SK-N-SH (cell line): ENCODE measurements at regions of chr3 and their contacts with region 1.

Region 1: DNA sequence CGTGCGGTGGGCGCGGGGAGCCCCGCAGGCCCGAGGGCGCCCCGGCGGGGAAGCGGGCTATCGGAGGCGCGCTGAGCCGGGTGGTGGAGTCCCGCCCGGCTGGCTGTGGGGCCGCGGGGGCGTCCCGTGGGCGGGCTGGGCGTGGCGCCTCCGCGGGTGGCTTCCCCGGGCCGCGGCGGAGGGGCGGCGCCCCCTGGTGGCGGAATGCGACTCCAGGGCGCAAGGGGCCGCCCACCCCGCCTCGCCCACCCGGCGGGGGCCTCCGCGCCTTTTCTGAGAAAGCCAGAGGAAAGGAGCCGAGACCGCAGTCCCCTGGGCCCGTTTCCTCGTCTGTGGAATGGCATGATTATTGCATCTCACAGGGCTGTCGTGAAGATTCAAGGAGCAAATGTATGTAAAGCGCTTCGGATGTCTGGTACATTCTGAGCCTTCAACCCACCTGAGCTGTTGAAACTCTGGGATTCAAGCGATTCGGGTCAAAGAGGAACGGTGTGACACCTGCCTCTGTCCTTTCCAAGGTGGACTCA is 31.9 kb upstream of the RAB6B start:
- DNase-seq: peak; percentile 95
- H3K4me3 ChIP-seq: peak overlapping the region; percentile 23 to 53; a peak in 3 of 4 replicates
- H3K27ac ChIP-seq: no peak overlapping the region
- H3K4me1 ChIP-seq: peaks cover 0 to 10% of the 10 kb centered on the region in 2 experiments; a peak in 2 of 4 replicates
- H3K27me3 ChIP-seq: no peaks in the 10 kb centered on the region
- CTCF ChIP-seq: peak; percentile 75
- EP300 ChIP-seq: no peak
- RAD21 ChIP-seq: peak; percentile 61

Region 2: DNA sequence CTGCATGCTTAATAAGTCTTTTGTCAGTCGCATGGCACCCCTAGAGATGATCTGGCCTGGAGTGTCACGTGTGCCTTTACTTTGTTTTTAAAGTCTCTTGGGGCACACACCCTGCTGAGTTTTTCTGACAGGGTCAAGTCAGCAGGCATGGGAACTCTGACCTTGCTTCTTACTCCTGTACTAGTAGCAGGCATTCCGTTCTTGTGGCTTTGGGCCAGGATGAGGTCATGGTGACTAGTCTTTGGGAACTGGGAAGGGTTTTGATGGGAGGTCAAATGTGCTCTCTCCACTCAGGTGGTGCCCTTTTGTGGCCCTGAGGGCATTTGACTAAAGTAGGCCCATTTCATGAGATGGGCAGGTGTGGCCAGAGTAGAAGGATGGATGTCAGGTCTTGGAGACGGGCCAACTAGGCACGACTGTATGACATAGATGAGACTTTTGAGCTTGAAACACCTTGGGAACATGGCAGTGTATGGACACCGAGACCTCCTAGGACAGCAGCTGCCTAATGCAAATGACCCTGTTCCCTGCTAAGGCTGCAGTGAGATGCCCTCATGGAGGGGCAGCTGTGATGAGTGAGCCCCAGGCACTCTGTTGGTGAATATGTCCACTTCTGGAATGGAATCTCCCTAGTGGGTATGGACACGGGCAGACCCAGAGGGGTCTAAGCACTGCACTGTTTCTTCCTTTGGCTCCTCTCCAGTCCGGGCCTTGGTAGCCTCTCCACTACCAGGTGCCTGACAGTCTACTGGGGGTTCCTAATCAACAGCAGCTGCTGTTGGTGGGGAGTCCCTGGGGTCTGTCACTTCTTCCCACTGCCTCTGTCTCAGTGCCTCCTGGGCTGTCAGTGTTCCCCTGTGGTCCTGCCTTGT is 105.6 kb before region 1 on chr3:
- CTCF ChIA-PET with region 1: interaction called, 103 read pairs
- POLR2A ChIA-PET with region 1: no interaction called
- DNase-seq: no peak
- H3K4me3 ChIP-seq: no peak overlapping the region
- H3K27ac ChIP-seq: no peak overlapping the region
- H3K4me1 ChIP-seq: no peaks in the 10 kb centered on the region
- H3K27me3 ChIP-seq: no peaks in the 10 kb centered on the region
- CTCF ChIP-seq: no peak
- EP300 ChIP-seq: no peak
- RAD21 ChIP-seq: no peak

Region 3: DNA sequence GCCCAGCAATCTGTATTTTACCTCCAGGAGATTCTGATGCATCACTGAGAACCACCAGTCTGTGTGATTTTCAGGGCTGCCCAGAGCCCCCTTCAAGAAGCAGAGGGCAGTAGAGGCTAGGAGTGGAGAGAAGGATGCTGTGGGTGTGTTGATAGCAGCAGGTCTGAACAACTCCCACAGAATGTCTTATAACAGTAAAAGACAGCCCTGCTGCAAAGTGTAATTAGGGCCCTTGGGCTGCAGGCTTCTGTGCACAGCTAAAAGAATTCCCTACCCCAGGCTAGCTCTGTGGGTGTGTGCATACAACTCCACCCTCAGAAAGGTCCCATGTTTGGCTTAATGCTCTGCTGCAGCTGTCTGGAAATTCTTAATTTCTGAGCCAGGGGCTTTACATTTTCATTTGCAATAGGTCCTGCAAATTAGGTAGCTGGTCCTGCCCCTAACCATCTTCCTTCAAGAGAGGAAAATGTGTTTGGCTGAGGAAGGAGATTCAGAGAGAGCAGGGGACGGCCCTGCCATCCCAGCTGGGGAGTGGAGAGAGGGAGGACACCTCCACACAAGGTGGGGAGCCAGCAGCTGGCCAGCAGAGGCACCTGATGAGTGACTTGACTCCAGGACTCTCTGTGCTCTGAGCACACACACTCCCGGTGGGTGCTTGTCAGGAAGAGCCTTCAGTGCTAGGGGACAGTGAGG is 11.3 kb after region 1 on chr3:
- CTCF ChIA-PET with region 1: interaction called, 11 read pairs
- POLR2A ChIA-PET with region 1: no interaction called
- DNase-seq: no peak
- H3K4me3 ChIP-seq: no peak overlapping the region
- H3K27ac ChIP-seq: no peak overlapping the region
- H3K4me1 ChIP-seq: peaks cover 4 to 11% of the 10 kb centered on the region in 2 experiments; a peak in 2 of 4 replicates
- H3K27me3 ChIP-seq: 0 out of 2 replicates have a peak, but pooled peaks cover 4% of the 10 kb centered on the region
- CTCF ChIP-seq: no peak
- EP300 ChIP-seq: no peak
- RAD21 ChIP-seq: peak; percentile 49

Region 4: GRCh38 chr3:133944641-133945380 is 17.2 kb after region 1 on chr3:
- CTCF ChIA-PET with region 1: interaction called, 17 read pairs
- POLR2A ChIA-PET with region 1: no interaction called
- DNase-seq: peak; percentile 59
- H3K4me3 ChIP-seq: peak overlapping the region in 1 of 2 experiments; percentile 13; a peak in 2 of 4 replicates
- H3K27ac ChIP-seq: peak overlapping the region; percentile 70 to 80
- H3K4me1 ChIP-seq: peaks cover 26 to 30% of the 10 kb centered on the region in 2 experiments; a peak in 3 of 4 replicates
- H3K27me3 ChIP-seq: peaks cover 8% of the 10 kb centered on the region; the same call in 1 of the 2 replicates
- CTCF ChIP-seq: no peak
- EP300 ChIP-seq: peak; percentile 22 to 90; a peak in 2 of 4 replicates
- RAD21 ChIP-seq: no peak

Region 5: DNA sequence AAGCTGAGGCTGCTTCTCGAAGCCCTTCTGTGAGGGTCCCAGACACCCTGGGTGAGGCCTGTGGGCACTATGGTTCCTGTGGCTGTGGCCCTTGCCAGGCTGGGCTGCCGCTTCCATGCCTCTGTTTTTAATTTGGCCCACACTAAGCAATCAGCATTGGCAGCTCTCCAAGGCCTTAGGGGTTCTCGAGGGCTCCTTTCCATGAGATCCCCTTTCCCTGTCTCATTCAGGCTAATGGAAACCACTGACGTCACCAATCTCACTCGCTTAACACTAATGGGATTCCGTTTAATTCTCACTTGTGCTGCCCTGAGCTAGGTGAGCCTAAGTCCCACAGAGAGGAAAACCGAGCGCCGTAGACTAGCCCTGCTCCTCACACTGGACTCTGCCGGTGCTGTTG is 28.3 kb after region 1 on chr3:
- CTCF ChIA-PET with region 1: interaction called, 23 read pairs
- POLR2A ChIA-PET with region 1: no interaction called
- DNase-seq: peak; percentile 89
- H3K4me3 ChIP-seq: no peak overlapping the region; a peak in 1 of 4 replicates
- H3K27ac ChIP-seq: peak overlapping the region in 1 of 2 experiments; percentile 62; a peak in 2 of 4 replicates
- H3K4me1 ChIP-seq: peaks cover 0 to 24% of the 10 kb centered on the region in 2 experiments; a peak in 2 of 4 replicates
- H3K27me3 ChIP-seq: 0 out of 2 replicates have a peak, but pooled peaks cover 10% of the 10 kb centered on the region
- CTCF ChIP-seq: no peak
- EP300 ChIP-seq: peak in 1 of 2 experiments; percentile 70; a peak in 1 of 4 replicates
- RAD21 ChIP-seq: peak; percentile 24; the same call in 1 of the 2 replicates

Region 6: GRCh38 chr3:133991637-133992036 is 64.0 kb after region 1 on chr3:
- CTCF ChIA-PET with region 1: no interaction called
- POLR2A ChIA-PET with region 1: no interaction called
- DNase-seq: no peak
- H3K4me3 ChIP-seq: no peak overlapping the region
- H3K27ac ChIP-seq: no peak overlapping the region
- H3K4me1 ChIP-seq: no peaks in the 10 kb centered on the region
- H3K27me3 ChIP-seq: no peaks in the 10 kb centered on the region
- CTCF ChIP-seq: no peak
- EP300 ChIP-seq: no peak
- RAD21 ChIP-seq: no peak